SK-N-SH (cell line): ENCODE measurements at regions of chr2 and their contacts with region 1.

Region 1: GRCh38 chr2:199452205-199452990 is 5.3 kb downstream of the SATB2 start:
- DNase-seq: no peak
- H3K4me3 ChIP-seq: no peak overlapping the region
- H3K27ac ChIP-seq: no peak overlapping the region
- H3K4me1 ChIP-seq: no peaks in the 10 kb centered on the region
- H3K27me3 ChIP-seq: peaks cover 27% of the 10 kb centered on the region
- CTCF ChIP-seq: no peak
- EP300 ChIP-seq: no peak
- RAD21 ChIP-seq: no peak

Region 2: DNA sequence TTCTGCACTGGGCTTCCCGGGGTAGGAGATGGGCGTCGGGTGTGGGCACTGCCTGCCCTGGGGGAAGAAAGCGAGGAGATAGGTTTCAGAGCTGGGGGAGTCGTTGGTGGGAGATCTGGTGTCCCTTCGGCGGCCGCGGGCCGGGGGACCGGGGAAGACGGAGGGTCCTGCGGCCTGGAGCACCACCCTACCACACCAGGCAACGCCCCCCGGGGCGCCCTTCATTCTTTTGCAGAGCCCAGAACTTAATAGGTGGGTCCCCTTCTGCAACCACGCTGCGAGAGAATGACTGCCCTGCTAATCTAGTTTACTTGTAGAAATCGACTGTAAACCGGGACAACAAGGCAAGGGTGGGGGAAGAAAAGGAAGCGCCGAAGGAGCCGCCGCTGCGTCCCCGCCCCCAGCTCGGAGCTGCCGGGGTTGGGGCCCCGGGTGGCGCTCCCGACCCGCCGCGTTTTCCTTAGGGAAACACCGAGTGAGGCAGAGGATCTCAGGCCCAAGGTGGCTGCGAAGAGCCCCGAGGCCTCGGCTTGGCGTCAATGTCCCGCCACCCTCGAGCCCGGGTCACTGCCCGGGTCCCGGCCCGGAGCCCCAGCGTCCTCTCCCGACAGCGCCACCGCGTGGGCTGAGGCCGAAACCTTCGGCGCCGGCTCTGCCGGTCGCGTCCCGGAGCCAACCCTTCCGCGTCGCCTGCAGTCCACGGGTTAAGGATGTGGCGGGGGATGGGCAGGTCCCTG is 10.7 kb after region 1 on chr2:
- CTCF ChIA-PET with region 1: interaction called, 12 read pairs
- POLR2A ChIA-PET with region 1: no interaction called
- DNase-seq: peak; percentile 90
- H3K4me3 ChIP-seq: peak overlapping the region; percentile 31 to 61
- H3K27ac ChIP-seq: no peak overlapping the region
- H3K4me1 ChIP-seq: peaks cover 0 to 12% of the 10 kb centered on the region in 2 experiments; a peak in 1 of 4 replicates
- H3K27me3 ChIP-seq: peaks cover 87% of the 10 kb centered on the region
- CTCF ChIP-seq: peak; percentile 77
- EP300 ChIP-seq: no peak
- RAD21 ChIP-seq: peak; percentile 33; the same call in 1 of the 2 replicates